Naive thymus-derived CD4-positive, alpha-beta T cell (primary cell): ENCODE measurements at regions of chr15 and their contacts with region 1.

Region 1: DNA sequence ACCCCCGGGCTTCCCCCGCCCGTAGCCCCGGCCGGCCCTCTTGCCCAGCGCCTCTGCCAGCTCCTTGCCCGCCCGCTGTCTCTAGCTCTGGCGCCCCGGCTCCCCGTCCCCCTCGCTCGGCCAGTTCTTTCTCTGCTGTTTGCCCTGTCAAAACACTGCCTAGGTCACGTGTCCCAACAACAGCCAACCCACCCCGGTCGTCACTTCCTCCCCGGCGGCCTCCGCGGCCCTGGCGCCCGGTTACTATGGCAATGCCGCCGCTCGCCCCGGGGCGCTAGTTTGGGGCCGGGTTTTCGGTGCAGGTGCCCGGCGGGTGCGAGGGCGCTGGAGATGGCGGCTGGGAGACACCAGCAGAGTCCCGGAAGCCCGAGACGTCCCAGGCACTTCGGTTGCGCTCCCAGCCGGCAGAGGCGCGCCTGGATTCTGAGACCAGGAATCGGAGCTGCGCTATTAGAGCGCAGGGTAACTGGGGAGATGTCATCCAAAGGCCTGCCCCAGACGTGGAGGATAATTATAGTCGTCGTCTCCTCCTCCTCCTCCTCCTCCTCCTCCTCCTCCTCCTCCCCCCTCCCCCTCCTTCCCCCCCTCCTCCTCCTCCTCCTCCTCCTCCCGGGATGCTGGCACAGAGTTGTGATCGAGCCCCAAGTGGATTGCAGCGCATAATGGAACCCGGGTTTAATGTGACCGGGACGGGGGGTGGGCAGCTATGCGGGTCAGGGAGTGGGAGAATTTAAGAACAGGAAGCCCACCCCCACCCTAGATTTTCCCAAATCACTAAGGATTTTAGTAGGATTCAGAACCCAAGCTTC is at the start of gene ATOSA:
- DNase-seq: peak; percentile 84 to 93 (median 90)
- ATAC-seq: peak; percentile 87
- H3K4me3 ChIP-seq: peak within 1 kb of the TSS; percentile 82
- H3K4me3 Mint-ChIP-seq: peak within 1 kb of the TSS; percentile 91 to 100 (median 96)
- H3K27ac ChIP-seq: peak within 1 kb of the TSS; percentile 99
- H3K27ac Mint-ChIP-seq: peak within 1 kb of the TSS; percentile 94 to 100 (median 99)
- H3K4me1 ChIP-seq: peaks cover 35 to 54% of the 10 kb centered on the region in 2 donors
- H3K4me1 Mint-ChIP-seq: peaks cover 31 to 61% (median 46%) of the 10 kb centered on the region in 7 donors
- H3K27me3 ChIP-seq: no peaks in the 10 kb centered on the region
- H3K27me3 Mint-ChIP-seq: peaks cover 0 to 12% (median 0%) of the 10 kb centered on the region in 5 donors
- total RNA-seq, gene ATOSA: 35.1 to 117 (median 95.7) TPM

Region 2: GRCh38 chr15:51971375-51972133 is 707.9 kb before region 1 on chr15 and contains the start of gene LEO1:
- CTCF ChIA-PET with region 1: no interaction called
- POLR2A ChIA-PET with region 1: no interaction called
- intact Hi-C with region 1: loop called in 1 of 2 experiments (anchors 5 kb)
- DNase-seq: peak; percentile 59 to 94 (median 91)
- ATAC-seq: peak; percentile 98
- H3K4me3 ChIP-seq: peak within 1 kb of the TSS; percentile 95
- H3K4me3 Mint-ChIP-seq: peak within 1 kb of the TSS; percentile 97 to 99 (median 98)
- H3K27ac ChIP-seq: peak within 1 kb of the TSS; percentile 79
- H3K27ac Mint-ChIP-seq: peak within 1 kb of the TSS; percentile 94 to 100 (median 98)
- H3K4me1 ChIP-seq: peaks cover 11 to 13% of the 10 kb centered on the region in 2 donors
- H3K4me1 Mint-ChIP-seq: peaks cover 10 to 33% (median 26%) of the 10 kb centered on the region in 7 donors
- H3K27me3 ChIP-seq: no peaks in the 10 kb centered on the region
- H3K27me3 Mint-ChIP-seq: peaks cover 0 to 3% (median 0%) of the 10 kb centered on the region in 5 donors
- total RNA-seq, gene LEO1: 9.2 to 30.1 (median 19.3) TPM

Region 3: DNA sequence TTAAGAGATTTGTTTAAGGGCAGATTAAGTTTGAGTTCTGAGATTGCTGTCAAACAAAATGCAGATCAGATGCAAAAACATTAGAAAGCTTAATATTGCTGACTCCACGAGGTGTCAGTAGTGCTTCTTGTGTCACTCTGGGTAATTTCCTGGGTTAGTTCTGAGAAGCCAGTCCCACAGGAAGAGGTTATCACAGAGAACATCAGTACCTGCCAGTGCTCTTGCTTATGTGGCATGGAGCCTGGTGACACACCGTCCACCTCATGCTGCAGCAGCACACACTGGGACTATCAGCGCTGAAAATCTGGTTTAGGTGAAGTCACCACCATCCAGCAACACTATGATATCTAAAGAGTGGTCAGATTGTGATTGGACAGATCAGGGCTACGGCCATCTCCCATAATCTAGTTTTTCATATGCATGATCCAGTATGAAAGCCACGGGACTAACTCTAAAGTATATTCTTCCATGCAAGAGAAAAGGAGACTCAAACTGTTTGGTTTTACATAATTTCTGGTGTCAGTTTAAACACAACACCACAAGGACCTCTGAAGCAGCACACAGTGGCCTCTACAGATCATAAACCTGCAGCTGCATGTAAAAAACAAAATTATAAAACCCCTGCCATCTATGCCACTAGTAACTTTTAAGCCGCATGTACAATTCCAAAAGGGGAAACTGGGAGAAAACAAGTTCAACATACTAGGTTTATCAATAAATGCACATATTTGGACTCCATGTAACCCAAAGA is 347.8 kb before region 1 on chr15:
- CTCF ChIA-PET with region 1: no interaction called
- POLR2A ChIA-PET with region 1: interaction called, 3 read pairs
- intact Hi-C with region 1: loop called (anchors 1 kb)
- DNase-seq: peak in 8 of 9 donors; percentile 43 to 70 (median 54)
- ATAC-seq: peak; percentile 97
- H3K4me3 ChIP-seq: no peak overlapping the region
- H3K4me3 Mint-ChIP-seq: peak overlapping the region in 8 of 10 donors; percentile 26 to 81 (median 54)
- H3K27ac ChIP-seq: no peak overlapping the region
- H3K27ac Mint-ChIP-seq: peak overlapping the region; percentile 53 to 92 (median 71)
- H3K4me1 ChIP-seq: peaks cover 10 to 11% of the 10 kb centered on the region in 2 donors
- H3K4me1 Mint-ChIP-seq: peaks cover 11 to 23% (median 19%) of the 10 kb centered on the region in 7 donors
- H3K27me3 ChIP-seq: no peaks in the 10 kb centered on the region
- H3K27me3 Mint-ChIP-seq: no peaks in the 10 kb centered on the region

Region 4: GRCh38 chr15:52528991-52529926 is 150.2 kb before region 1 on chr15:
- CTCF ChIA-PET with region 1: no interaction called
- POLR2A ChIA-PET with region 1: interaction called, 7 read pairs
- intact Hi-C with region 1: loop called (anchors 1 kb)
- DNase-seq: peak; percentile 72 to 82 (median 80)
- ATAC-seq: peak; percentile 93
- H3K4me3 ChIP-seq: peak overlapping the region; percentile 60
- H3K4me3 Mint-ChIP-seq: peak overlapping the region; percentile 72 to 94 (median 89)
- H3K27ac ChIP-seq: peak overlapping the region; percentile 67
- H3K27ac Mint-ChIP-seq: peak overlapping the region; percentile 38 to 87 (median 74)
- H3K4me1 ChIP-seq: peaks cover 11 to 12% of the 10 kb centered on the region in 2 donors
- H3K4me1 Mint-ChIP-seq: peaks cover 22 to 37% (median 25%) of the 10 kb centered on the region in 7 donors
- H3K27me3 ChIP-seq: no peaks in the 10 kb centered on the region
- H3K27me3 Mint-ChIP-seq: peaks cover 0 to 25% (median 0%) of the 10 kb centered on the region in 5 donors

Region 5: GRCh38 chr15:52651868-52652267 is 27.6 kb before region 1 on chr15:
- CTCF ChIA-PET with region 1: interaction called, 3 read pairs
- POLR2A ChIA-PET with region 1: no interaction called
- intact Hi-C with region 1: loop called in 1 of 2 experiments (anchors 1 kb)
- DNase-seq: peak in 7 of 9 donors; percentile 9 to 41 (median 32)
- ATAC-seq: peak; percentile 97
- H3K4me3 ChIP-seq: no peak overlapping the region
- H3K4me3 Mint-ChIP-seq: peak overlapping the region in 5 of 10 donors; percentile 23 to 62 (median 50)
- H3K27ac ChIP-seq: no peak overlapping the region
- H3K27ac Mint-ChIP-seq: peak overlapping the region in 4 of 9 donors; percentile 28 to 64 (median 51)
- H3K4me1 ChIP-seq: no peaks in the 10 kb centered on the region
- H3K4me1 Mint-ChIP-seq: peaks cover 6 to 41% (median 15%) of the 10 kb centered on the region in 7 donors
- H3K27me3 ChIP-seq: no peaks in the 10 kb centered on the region
- H3K27me3 Mint-ChIP-seq: no peaks in the 10 kb centered on the region

Region 6: DNA sequence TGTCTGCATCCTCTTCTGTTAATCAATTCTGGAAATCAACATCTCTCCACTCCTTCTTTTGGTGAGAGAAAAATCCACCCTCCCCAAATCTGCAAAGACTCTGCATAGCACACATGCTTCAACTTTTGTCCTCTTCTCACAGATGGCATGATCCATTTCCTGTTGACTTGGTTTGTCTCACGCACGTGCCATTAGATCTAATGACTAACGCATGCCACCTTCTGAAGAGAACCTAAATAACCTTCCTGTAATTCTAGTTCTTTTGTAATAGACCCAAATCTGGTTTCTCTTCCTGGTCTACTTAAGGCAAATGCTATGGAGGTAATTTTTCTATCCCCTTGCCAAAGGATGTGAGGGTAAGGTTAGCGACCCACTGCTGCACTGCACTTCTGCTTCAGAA is 50.7 kb after region 1 on chr15:
- CTCF ChIA-PET with region 1: interaction called, 7 read pairs
- POLR2A ChIA-PET with region 1: interaction called, 19 read pairs
- intact Hi-C with region 1: loop called (anchors 1 kb)
- DNase-seq: peak in 7 of 9 donors; percentile 53 to 82 (median 75)
- ATAC-seq: peak; percentile 96
- H3K4me3 ChIP-seq: no peak overlapping the region
- H3K4me3 Mint-ChIP-seq: peak overlapping the region; percentile 10 to 69 (median 50)
- H3K27ac ChIP-seq: no peak overlapping the region
- H3K27ac Mint-ChIP-seq: peak overlapping the region; percentile 56 to 94 (median 87)
- H3K4me1 ChIP-seq: peaks cover 11 to 15% of the 10 kb centered on the region in 2 donors
- H3K4me1 Mint-ChIP-seq: peaks cover 6 to 31% (median 20%) of the 10 kb centered on the region in 7 donors
- H3K27me3 ChIP-seq: no peaks in the 10 kb centered on the region
- H3K27me3 Mint-ChIP-seq: no peaks in the 10 kb centered on the region